ENCODE measurements at regions of chr3 and their contacts with region 1.

Region 1: GRCh38 chr3:30693470-30694120 is 87.2 kb downstream of the TGFBR2 start:
- DNase-seq: peak; percentile 89
- H3K4me3 ChIP-seq: no peak overlapping the region
- H3K27ac ChIP-seq: no peak overlapping the region
- H3K4me1 ChIP-seq: peaks cover 67% of the 10 kb centered on the region
- H3K27me3 ChIP-seq: no peaks in the 10 kb centered on the region
- CTCF ChIP-seq: peak; percentile 88

Region 2: GRCh38 chr3:30012941-30013543 is 680.6 kb before region 1 on chr3:
- CTCF ChIA-PET with region 1: no interaction called
- POLR2A ChIA-PET with region 1: no interaction called
- intact Hi-C with region 1: loop called (anchors 2 kb)
- DNase-seq: peak; percentile 92
- H3K4me3 ChIP-seq: no peak overlapping the region
- H3K27ac ChIP-seq: no peak overlapping the region
- H3K4me1 ChIP-seq: peaks cover 24% of the 10 kb centered on the region
- H3K27me3 ChIP-seq: no peaks in the 10 kb centered on the region
- CTCF ChIP-seq: peak; percentile 87

Region 3: GRCh38 chr3:30084971-30085403 is 608.6 kb before region 1 on chr3:
- CTCF ChIA-PET with region 1: interaction called, 10 read pairs
- POLR2A ChIA-PET with region 1: no interaction called
- intact Hi-C with region 1: no loop called
- DNase-seq: no peak
- H3K4me3 ChIP-seq: no peak overlapping the region
- H3K27ac ChIP-seq: no peak overlapping the region
- H3K4me1 ChIP-seq: peaks cover 9% of the 10 kb centered on the region
- H3K27me3 ChIP-seq: no peaks in the 10 kb centered on the region
- CTCF ChIP-seq: no peak

Region 4: DNA sequence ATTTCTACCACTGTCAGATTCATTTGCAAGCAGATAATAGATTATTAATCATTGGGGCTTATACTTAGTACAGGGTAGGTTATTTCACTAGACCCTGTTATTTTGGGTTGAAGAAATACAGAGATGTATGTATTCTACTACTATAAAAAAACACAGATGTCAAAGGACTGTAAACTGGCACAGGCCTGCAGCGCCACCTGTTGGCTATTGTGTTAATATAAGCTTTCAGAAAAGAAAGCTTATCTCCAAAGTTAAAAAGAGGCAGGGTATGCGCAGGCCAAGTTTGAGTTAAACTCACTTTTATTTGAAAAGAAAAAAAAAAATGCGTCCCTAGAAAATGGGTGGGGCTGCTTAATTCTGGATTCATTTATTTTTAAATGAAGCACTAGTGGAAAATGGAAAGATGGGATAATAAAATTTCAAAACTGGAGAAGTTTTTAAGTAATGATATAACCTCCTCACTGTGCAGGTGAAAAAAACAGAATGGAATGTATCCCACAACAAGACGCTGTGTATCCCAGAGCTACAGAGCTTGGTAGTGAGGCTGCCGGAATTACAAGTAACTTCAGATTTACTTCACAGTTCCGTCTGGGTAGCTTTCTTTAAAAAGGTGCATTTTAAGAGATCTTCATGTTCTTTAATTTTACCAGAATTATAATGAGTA is 494.4 kb before region 1 on chr3:
- CTCF ChIA-PET with region 1: interaction called, 9 read pairs
- POLR2A ChIA-PET with region 1: no interaction called
- intact Hi-C with region 1: loop called (anchors 2 kb)
- DNase-seq: peak; percentile 80
- H3K4me3 ChIP-seq: no peak overlapping the region
- H3K27ac ChIP-seq: no peak overlapping the region
- H3K4me1 ChIP-seq: peaks cover 13% of the 10 kb centered on the region
- H3K27me3 ChIP-seq: no peaks in the 10 kb centered on the region
- CTCF ChIP-seq: peak; percentile 85

Region 5: GRCh38 chr3:30248423-30248822 is 445.2 kb before region 1 on chr3:
- CTCF ChIA-PET with region 1: no interaction called
- POLR2A ChIA-PET with region 1: no interaction called
- intact Hi-C with region 1: no loop called
- DNase-seq: no peak
- H3K4me3 ChIP-seq: no peak overlapping the region
- H3K27ac ChIP-seq: no peak overlapping the region
- H3K4me1 ChIP-seq: peaks cover 11% of the 10 kb centered on the region
- H3K27me3 ChIP-seq: no peaks in the 10 kb centered on the region
- CTCF ChIP-seq: no peak

Region 6: GRCh38 chr3:30347679-30348216 is 345.8 kb before region 1 on chr3:
- CTCF ChIA-PET with region 1: no interaction called
- POLR2A ChIA-PET with region 1: no interaction called
- intact Hi-C with region 1: loop called (anchors 5 kb)
- DNase-seq: no peak
- H3K4me3 ChIP-seq: no peak overlapping the region
- H3K27ac ChIP-seq: peak overlapping the region; percentile 4
- H3K4me1 ChIP-seq: peaks cover 35% of the 10 kb centered on the region
- H3K27me3 ChIP-seq: no peaks in the 10 kb centered on the region
- CTCF ChIP-seq: no peak

Region 7: DNA sequence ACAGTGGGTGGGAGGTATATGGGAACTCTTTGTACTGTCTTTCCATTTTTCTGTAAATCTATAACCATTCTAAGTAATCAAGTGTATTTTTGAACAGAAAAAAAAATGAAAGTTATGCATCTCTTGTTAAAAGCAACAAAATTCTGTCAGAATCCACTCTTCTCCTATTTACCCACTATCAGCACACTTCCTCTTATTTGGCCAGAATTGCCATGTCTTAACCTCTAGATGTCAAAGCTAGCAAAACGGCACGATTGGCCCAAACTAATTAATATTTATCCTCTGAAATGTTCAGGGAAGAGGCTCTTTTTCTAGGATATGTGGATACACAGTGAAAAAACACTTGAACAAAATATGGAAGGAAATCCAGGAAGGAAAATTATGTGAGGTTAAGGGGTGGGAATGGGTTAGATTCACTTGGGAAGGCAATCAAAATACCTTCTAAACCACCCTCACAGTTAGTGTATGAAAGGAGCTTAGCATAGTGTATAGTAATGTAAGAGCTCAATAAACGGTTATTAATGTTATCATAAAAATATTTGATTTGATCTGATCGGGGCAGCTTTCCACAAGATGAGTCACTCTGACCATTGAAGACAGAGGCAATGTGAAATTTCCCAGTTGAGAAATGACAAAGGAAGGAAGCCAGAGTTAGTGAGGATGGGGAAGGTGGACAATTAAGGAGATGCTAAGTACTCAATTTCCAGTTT is 107.3 kb before region 1 on chr3:
- CTCF ChIA-PET with region 1: no interaction called
- POLR2A ChIA-PET with region 1: no interaction called
- intact Hi-C with region 1: no loop called
- DNase-seq: no peak
- H3K4me3 ChIP-seq: no peak overlapping the region
- H3K27ac ChIP-seq: no peak overlapping the region
- H3K4me1 ChIP-seq: no peaks in the 10 kb centered on the region
- H3K27me3 ChIP-seq: no peaks in the 10 kb centered on the region
- CTCF ChIP-seq: no peak

Region 8: DNA sequence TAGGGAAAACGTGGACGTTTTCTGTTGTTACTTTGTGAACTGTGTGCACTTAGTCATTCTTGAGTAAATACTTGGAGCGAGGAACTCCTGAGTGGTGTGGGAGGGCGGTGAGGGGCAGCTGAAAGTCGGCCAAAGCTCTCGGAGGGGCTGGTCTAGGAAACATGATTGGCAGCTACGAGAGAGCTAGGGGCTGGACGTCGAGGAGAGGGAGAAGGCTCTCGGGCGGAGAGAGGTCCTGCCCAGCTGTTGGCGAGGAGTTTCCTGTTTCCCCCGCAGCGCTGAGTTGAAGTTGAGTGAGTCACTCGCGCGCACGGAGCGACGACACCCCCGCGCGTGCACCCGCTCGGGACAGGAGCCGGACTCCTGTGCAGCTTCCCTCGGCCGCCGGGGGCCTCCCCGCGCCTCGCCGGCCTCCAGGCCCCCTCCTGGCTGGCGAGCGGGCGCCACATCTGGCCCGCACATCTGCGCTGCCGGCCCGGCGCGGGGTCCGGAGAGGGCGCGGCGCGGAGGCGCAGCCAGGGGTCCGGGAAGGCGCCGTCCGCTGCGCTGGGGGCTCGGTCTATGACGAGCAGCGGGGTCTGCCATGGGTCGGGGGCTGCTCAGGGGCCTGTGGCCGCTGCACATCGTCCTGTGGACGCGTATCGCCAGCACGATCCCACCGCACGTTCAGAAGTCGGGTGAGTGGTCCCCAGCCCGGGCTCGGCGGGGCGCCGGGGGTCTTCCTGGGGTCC is 87.1 kb before region 1 on chr3 and contains the start of gene TGFBR2:
- CTCF ChIA-PET with region 1: interaction called, 3 read pairs
- POLR2A ChIA-PET with region 1: no interaction called
- intact Hi-C with region 1: loop called (anchors 2 kb)
- DNase-seq: peak; percentile 94
- H3K4me3 ChIP-seq: peak within 1 kb of the TSS; percentile 89
- H3K27ac ChIP-seq: peak within 1 kb of the TSS; percentile 91
- H3K4me1 ChIP-seq: peaks cover 33% of the 10 kb centered on the region
- H3K27me3 ChIP-seq: no peaks in the 10 kb centered on the region
- CTCF ChIP-seq: no peak
- total RNA-seq, gene TGFBR2: 16.1 TPM in 2 replicates

Region 9: GRCh38 chr3:30671527-30672286 is 21.9 kb before region 1 on chr3:
- CTCF ChIA-PET with region 1: interaction called, 14 read pairs
- POLR2A ChIA-PET with region 1: interaction called, 3 read pairs
- intact Hi-C with region 1: no loop called
- DNase-seq: no peak
- H3K4me3 ChIP-seq: no peak overlapping the region
- H3K27ac ChIP-seq: no peak overlapping the region
- H3K4me1 ChIP-seq: peaks cover 25% of the 10 kb centered on the region
- H3K27me3 ChIP-seq: no peaks in the 10 kb centered on the region
- CTCF ChIP-seq: no peak